Common myeloid progenitor, CD34-positive (primary cell): ENCODE measurements at regions of chr12 and their contacts with region 1.

Region 1: GRCh38 chr12:132414634-132415326 is 75.2 kb upstream of the FBRSL1 start:
- DNase-seq: peak; percentile 67 to 79 (median 68)
- H3K4me3 ChIP-seq: no peak overlapping the region
- H3K27ac ChIP-seq: no peak overlapping the region
- H3K4me1 ChIP-seq: peaks cover 0 to 13% (median 9%) of the 10 kb centered on the region in 4 experiments
- H3K27me3 ChIP-seq: peaks cover 0 to 5% (median 0%) of the 10 kb centered on the region in 5 experiments

Region 2: DNA sequence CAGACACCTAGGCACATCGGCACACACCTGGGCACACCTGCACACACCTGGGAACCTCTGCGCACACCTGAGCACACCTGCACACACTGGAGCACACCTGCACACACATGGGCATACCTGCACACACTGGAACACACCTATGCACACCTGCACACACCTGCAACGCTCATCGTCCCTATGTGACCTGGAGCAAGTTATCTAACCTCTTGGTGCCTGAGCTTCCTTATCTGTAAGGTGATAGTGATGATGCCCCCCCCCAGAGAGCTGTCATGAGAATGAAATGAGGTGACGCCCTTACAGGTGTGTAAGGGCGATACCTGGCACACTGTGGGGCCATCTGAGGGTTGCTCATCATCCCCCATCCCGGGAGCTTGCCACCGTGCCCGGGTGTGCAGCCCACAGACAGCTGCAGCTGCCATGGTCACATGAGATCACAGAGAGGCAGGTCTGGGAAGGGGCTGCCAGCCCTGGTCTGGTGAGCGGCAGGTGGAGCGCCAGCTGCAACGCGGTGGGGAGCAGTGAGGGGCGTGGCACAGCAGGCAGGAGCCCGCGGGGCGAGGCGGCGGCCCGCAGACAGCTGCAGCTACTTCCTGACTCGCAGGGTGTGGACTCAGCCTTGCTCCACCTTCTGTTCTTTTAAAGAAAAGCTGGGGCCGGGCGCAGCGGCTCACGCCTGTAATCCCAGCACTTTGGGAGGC is 15.3 kb after region 1 on chr12:
- CTCF ChIA-PET with region 1: interaction called, 45 read pairs
- POLR2A ChIA-PET with region 1: no interaction called
- DNase-seq: peak; percentile 87 to 96 (median 96)
- H3K4me3 ChIP-seq: peak overlapping the region in 3 of 7 experiments; percentile 28 to 54 (median 48)
- H3K27ac ChIP-seq: no peak overlapping the region
- H3K4me1 ChIP-seq: peaks cover 0 to 50% (median 36%) of the 10 kb centered on the region in 4 experiments
- H3K27me3 ChIP-seq: no peaks in the 10 kb centered on the region

Region 3: GRCh38 chr12:132445884-132446632 is 31.3 kb after region 1 on chr12:
- CTCF ChIA-PET with region 1: no interaction called
- POLR2A ChIA-PET with region 1: no interaction called
- DNase-seq: peak; percentile 74 to 97 (median 91)
- H3K4me3 ChIP-seq: peak overlapping the region in 4 of 7 experiments; percentile 32 to 66 (median 52)
- H3K27ac ChIP-seq: peak overlapping the region; percentile 72 to 81
- H3K4me1 ChIP-seq: peaks cover 3 to 46% (median 40%) of the 10 kb centered on the region in 4 experiments
- H3K27me3 ChIP-seq: no peaks in the 10 kb centered on the region

Region 4: DNA sequence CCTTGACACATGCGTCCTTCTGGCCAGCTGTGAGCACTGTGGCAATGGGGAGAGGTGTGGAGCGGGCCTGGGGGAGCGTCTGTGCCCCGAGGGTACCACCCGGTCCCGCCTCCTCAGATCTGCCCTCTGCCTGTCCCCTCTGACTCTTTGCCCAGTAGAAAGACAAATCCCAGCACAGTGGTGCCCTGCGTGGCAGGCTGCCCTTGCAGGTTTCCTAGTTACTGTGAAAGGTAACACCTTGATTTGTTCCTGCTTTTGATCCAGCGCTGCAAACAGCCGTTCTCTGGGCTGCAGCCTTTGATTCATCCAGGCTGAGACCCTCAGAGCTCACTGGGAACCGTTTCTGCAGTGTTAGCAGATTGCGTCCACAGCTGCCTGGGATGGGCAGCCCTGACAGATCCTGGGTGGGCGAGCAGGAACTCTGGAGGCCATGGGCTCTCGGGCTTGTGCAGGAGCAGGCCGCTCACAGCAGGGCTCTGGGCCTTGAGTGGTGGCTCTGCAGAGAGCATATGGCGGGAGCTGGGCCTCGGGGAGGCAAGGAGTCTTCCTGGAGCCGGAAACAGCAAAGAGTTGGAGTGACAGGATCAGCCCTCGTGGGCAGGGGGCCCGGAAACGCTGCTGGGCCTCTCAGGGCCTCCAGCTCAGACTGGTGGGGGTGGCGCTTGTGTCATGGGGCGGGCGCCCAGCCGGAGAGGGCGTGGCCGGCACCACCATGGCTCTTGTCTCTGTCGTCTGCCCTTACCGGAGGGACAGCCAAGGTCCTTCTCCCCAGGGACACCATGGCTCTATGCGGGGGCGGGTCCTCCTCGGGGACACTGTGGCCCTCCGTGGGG is 91.8 kb after region 1 on chr12:
- CTCF ChIA-PET with region 1: interaction called, 39 read pairs
- POLR2A ChIA-PET with region 1: interaction called, 3 read pairs
- DNase-seq: peak; percentile 32 to 75 (median 69)
- H3K4me3 ChIP-seq: peak overlapping the region in 5 of 7 experiments; percentile 34 to 72 (median 58)
- H3K27ac ChIP-seq: peak overlapping the region; percentile 54 to 68
- H3K4me1 ChIP-seq: peaks cover 0 to 68% (median 60%) of the 10 kb centered on the region in 4 experiments
- H3K27me3 ChIP-seq: peaks cover 0 to 26% (median 0%) of the 10 kb centered on the region in 5 experiments

Region 5: DNA sequence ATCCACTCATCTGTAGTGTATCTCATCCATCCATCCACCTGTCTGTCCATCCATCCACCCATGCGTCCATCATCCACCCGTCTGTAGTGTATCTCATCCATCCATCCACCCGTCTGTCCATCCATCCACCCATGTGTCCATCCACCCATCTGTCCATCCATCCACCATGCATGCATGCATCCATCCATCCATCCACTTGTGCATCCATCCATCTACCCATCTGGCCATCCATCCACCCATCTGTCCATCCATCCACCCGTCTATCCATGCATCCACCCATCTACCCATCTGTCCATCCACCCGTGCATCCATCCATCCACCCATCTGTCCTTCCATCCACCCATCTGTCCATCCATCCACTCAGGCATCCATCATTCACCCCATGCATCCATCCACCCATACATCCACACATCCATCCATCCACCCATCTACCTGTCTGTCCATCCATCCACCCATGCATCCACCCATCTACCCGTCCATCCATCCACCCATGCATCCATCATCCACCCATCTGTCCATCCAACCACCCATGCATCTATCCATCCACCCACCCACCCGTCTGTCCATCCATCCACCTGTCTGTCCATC is 103.7 kb after region 1 on chr12:
- CTCF ChIA-PET with region 1: interaction called, 127 read pairs
- POLR2A ChIA-PET with region 1: interaction called, 7 read pairs
- DNase-seq: no peak
- H3K4me3 ChIP-seq: no peak overlapping the region
- H3K27ac ChIP-seq: no peak overlapping the region
- H3K4me1 ChIP-seq: peaks cover 0 to under 1% (median 0%) of the 10 kb centered on the region in 4 experiments
- H3K27me3 ChIP-seq: no peaks in the 10 kb centered on the region

Region 6: DNA sequence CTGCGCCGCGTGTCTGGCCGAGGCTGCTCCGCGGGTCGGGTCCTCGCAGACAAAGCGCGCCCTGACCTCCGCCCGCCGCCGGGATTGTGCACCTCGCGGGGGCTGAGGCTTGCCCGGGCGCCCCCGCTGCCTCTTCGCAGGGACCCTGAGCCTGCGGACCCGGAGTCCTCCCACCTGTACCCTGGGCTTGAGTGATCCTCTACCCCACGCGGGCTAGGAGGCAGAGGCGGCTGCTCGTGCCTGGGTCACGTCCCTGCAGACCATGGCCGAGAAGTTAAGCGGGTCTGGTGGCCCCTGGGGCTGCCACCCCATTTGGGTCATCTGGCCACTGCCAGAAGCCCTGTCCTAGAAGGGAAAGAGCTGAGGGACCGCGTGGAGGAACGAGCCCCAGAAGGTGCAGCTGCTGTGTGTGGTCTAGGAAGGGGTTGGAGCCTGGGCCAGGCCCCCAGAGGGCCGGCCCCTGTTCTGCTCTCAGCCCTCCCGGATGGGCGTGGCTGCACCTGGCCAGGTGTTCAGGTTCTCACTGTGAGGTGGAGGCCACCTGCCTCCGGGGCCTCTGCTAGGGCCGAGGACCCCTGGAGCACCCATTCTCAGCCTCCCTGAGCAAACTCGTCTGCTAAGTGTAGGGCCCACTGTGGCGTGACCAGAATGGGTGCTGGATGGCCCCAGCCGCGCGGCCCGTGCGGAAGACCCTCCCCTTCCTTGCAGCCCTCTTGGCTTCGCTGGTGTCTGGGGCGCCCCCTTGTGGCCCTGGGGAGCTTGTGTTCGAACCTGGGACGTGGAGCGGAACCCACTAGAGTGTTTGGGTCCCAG is 146.0 kb after region 1 on chr12:
- CTCF ChIA-PET with region 1: interaction called, 17 read pairs
- POLR2A ChIA-PET with region 1: no interaction called
- DNase-seq: peak; percentile 80 to 88 (median 83)
- H3K4me3 ChIP-seq: peak overlapping the region; percentile 58 to 90 (median 76)
- H3K27ac ChIP-seq: no peak overlapping the region
- H3K4me1 ChIP-seq: peaks cover 0 to 42% (median 40%) of the 10 kb centered on the region in 4 experiments
- H3K27me3 ChIP-seq: no peaks in the 10 kb centered on the region